ENCODE measurements at regions of chr9 and their contacts with region 1.

Region 1: DNA sequence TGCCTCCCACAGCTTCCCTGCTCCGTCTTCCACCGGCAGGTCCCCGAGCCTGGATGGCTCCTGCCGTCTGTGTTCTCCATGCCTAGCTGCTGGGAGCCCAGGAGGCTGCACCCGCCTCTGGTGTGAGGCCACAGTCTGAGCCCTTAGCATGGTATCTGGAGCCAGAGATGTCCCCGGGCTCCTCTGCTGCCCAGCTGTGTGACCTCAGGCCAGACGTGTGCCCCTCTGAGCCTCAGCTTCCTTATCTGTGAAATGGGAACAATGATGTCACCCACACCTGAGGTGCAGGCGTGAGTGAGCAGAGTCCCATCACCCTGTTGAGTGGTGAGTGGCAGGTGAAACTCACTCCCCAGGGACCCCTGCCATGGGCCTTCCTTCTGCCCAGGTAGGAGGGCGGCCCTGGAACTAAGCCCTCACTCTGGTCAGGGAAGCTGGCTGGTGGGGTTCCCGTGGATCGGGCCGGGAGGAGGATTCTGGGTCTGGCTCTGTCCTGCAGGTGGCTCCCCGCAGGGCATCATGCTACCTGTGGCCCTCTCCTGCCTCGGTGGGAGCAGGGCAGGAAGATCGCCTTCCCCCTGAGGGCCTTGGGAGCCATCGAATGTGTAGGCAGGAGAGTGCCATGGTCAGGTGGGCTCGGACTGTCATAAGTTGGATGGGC is 239.0 kb downstream of the PBX3 start:
- DNase-seq: no peak
- H3K4me3 ChIP-seq: no peak overlapping the region
- H3K27ac ChIP-seq: no peak overlapping the region
- H3K4me1 ChIP-seq: no peaks in the 10 kb centered on the region
- H3K27me3 ChIP-seq: no peaks in the 10 kb centered on the region
- CTCF ChIP-seq: no peak

Region 2: DNA sequence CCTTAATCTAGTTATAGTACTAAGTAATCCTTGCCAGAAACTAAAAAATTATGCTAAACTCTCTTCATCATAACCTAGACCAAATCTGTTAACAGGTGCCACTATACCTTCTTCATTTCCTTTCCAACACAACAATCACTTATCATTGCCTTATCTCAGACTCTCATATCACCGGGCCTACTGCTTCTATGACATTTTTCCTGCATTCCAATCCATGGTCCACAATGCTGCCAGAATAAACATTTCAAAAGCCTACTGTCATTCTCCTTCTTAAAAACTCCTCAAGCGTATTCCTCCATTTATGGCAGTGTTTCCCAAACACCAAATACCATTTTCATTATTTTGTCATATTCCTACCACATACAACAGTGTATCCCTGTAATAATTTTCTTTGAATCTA is 803.1 kb before region 1 on chr9:
- CTCF ChIA-PET with region 1: no interaction called
- POLR2A ChIA-PET with region 1: no interaction called
- intact Hi-C with region 1: no loop called
- DNase-seq: no peak
- H3K4me3 ChIP-seq: no peak overlapping the region
- H3K27ac ChIP-seq: no peak overlapping the region
- H3K4me1 ChIP-seq: peaks cover 6% of the 10 kb centered on the region
- H3K27me3 ChIP-seq: no peaks in the 10 kb centered on the region
- CTCF ChIP-seq: no peak

Region 3: GRCh38 chr9:126009047-126009446 is 22.9 kb after region 1 on chr9:
- CTCF ChIA-PET with region 1: no interaction called
- POLR2A ChIA-PET with region 1: no interaction called
- intact Hi-C with region 1: no loop called
- DNase-seq: no peak
- H3K4me3 ChIP-seq: no peak overlapping the region
- H3K27ac ChIP-seq: no peak overlapping the region
- H3K4me1 ChIP-seq: no peaks in the 10 kb centered on the region
- H3K27me3 ChIP-seq: no peaks in the 10 kb centered on the region
- CTCF ChIP-seq: peak; percentile 28; the same call in 1 of the 2 replicates

Region 4: DNA sequence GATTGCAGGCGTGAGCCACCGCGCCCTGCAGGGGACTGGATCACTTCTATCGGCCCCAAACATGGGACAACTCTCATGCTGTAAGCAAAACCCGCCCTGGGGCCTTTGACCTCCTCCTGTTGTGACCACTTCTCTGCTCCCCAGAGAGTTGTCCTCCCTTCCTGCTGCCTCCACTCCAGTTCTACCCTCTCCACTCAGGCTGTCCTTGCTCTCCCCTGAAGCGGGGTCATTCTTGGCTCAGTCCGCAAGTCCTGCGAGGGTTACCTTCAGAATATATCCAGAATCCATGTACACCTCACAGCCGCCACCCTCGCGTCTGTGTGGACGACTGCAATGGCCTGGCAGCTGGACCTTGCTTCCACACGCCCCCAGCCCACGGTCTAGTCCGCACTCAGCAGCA is 34.7 kb after region 1 on chr9:
- CTCF ChIA-PET with region 1: no interaction called
- POLR2A ChIA-PET with region 1: interaction called, 15 read pairs
- intact Hi-C with region 1: no loop called
- DNase-seq: no peak
- H3K4me3 ChIP-seq: no peak overlapping the region
- H3K27ac ChIP-seq: no peak overlapping the region
- H3K4me1 ChIP-seq: no peaks in the 10 kb centered on the region
- H3K27me3 ChIP-seq: peaks cover 10% of the 10 kb centered on the region
- CTCF ChIP-seq: no peak

Measured in A673 (cell line).